PC-3 (cell line): ENCODE measurements at regions of chr6 and their contacts with region 1.

Region 1: GRCh38 chr6:12295558-12296254 is 5.5 kb downstream of the EDN1 start:
- DNase-seq: no peak
- ATAC-seq: peak; percentile 23
- H3K4me3 ChIP-seq: no peak overlapping the region
- H3K27ac ChIP-seq: peak overlapping the region; percentile 85
- H3K4me1 ChIP-seq: peaks cover 61% of the 10 kb centered on the region
- H3K27me3 ChIP-seq: no peaks in the 10 kb centered on the region
- CTCF ChIP-seq: no peak

Region 2: GRCh38 chr6:12436683-12437082 is 141.0 kb after region 1 on chr6:
- CTCF ChIA-PET with region 1: no interaction called
- POLR2A ChIA-PET with region 1: interaction called, 10 read pairs
- intact Hi-C with region 1: no loop called
- DNase-seq: no peak
- ATAC-seq: no peak
- H3K4me3 ChIP-seq: no peak overlapping the region
- H3K27ac ChIP-seq: no peak overlapping the region
- H3K4me1 ChIP-seq: no peaks in the 10 kb centered on the region
- H3K27me3 ChIP-seq: no peaks in the 10 kb centered on the region
- CTCF ChIP-seq: no peak